Posterior vena cava (tissue), 2 donors: ENCODE measurements at regions of chr2 and their contacts with region 1.

Region 1: GRCh38 chr2:221388891-221389290 is 183.2 kb downstream of the EPHA4 start:
- DNase-seq: no peak

Region 2: DNA sequence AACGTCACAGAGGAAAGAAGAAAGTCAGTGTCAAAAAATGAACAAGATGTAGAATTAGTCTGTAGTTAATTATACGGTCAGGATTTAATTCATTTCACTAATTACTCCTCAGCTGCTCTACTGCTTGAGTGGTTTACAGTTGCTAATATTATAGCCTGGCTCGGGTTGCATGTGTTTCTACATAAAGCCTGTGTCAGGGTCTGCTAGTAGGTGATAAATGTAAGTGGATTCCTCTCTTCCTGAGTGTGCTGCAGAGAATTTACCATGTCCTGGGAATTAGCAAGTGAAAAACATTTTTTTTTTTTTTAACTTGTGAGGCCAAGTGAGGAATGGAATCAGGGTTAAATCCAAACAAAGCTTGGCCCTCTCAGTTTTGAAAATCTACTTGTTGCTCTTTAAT is 439.4 kb before region 1 on chr2:
- intact Hi-C with region 1: no loop called
- DNase-seq: no peak

Region 3: DNA sequence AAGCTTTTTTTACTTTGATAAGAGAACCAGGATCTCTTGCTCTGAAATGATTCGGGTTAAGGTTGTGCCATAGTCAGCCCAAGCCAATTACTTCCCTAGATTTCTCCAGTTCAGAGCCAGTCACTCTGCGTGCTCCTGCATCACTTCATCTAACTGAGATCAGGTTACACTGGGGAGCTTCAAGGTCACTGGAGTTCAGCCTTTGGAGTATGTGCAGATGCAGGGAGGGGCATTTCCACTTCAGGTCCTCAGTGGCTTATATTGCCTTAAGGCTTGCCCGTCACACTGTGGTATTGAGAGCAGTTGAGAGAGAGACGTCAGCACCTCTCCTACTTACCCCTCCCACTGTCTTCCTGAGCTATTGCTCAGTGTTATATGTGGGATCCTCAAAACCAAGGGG is 134.6 kb before region 1 on chr2:
- intact Hi-C with region 1: no loop called
- DNase-seq: no peak

Region 4: GRCh38 chr2:221322741-221323140 is 66.2 kb before region 1 on chr2:
- intact Hi-C with region 1: loop called in 1 of 2 experiments (anchors 2 kb)
- DNase-seq: no peak

Region 5: GRCh38 chr2:221347471-221347870 is 41.4 kb before region 1 on chr2:
- intact Hi-C with region 1: no loop called
- DNase-seq: no peak